ENCODE measurements at regions of chr5 and their contacts with region 1.

Region 1: GRCh38 chr5:989961-990530 is 18.6 kb upstream of the NKD2 start:
- DNase-seq: peak; percentile 87
- ATAC-seq: peak; percentile 76

Region 2: GRCh38 chr5:1050423-1051365 is 60.6 kb after region 1 on chr5:
- intact Hi-C with region 1: no loop called
- DNase-seq: peak; percentile 64
- ATAC-seq: peak; percentile 32

Region 3: GRCh38 chr5:1134478-1134877 is 144.4 kb after region 1 on chr5:
- intact Hi-C with region 1: loop called (anchors 10 kb)
- DNase-seq: no peak
- ATAC-seq: peak; percentile 6

Region 4: DNA sequence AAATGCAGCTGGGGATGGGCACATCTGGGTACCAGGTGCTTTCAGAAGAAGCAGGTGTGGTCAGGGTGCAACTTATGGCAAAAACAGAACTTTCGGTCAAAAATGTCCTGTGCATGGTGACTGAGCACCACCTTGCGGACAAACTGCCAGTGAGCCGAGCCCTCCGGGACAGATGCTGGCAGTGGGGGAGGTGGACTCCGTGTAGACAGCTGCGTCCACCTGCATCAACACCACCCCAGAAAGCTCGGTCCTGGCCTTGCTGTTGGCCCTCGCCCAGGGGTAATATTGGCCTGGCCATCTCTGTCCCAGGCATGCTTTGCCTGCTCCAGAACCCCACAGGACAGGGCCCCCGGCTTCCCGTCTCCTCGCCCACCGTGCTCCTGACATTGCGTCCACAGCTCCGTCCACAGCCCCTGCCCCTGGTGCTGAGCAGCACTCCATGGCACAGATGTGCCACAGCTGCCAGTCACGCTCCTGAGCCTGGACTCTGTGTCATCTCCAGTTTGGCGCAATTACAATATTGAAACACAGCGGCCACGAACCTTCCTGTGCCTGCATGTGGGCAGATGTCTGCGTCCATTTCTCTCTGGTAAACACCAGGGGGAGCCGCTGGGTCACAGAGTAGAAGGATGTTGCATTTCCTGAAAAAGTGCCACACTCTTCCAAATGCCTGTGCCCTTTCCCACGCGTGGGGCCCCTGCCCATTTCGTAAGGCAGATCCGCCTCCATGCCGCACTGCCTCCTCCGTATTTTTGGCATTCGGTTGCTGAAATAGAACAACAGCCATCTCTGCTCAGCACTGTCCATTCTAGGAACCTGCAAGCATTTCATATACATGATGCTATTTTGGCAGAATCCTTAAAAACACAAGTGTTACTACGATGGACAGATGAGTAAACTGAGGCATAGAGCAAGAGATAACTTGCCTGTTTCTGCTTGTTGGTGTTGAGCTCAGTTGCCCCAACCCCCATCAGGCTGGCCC is 178.0 kb after region 1 on chr5:
- intact Hi-C with region 1: loop called (anchors 5 kb)
- DNase-seq: peak; percentile 73
- ATAC-seq: peak; percentile 85

Region 5: GRCh38 chr5:1255081-1255561 is 265.1 kb after region 1 on chr5:
- intact Hi-C with region 1: no loop called
- DNase-seq: no peak
- ATAC-seq: no peak

Measured in Right ventricle myocardium superior (tissue), 1 donor.